ENCODE measurements at regions of chr15 and their contacts with region 1.

Region 1: GRCh38 chr15:88454867-88455810 is 12.0 kb downstream of the MRPL46 start:
- DNase-seq: peak; percentile 64
- ATAC-seq: peak; percentile 87
- H3K4me3 Mint-ChIP-seq: no peak overlapping the region
- H3K27ac Mint-ChIP-seq: no peak overlapping the region
- H3K4me1 Mint-ChIP-seq: peaks cover 6% of the 10 kb centered on the region
- H3K27me3 Mint-ChIP-seq: no peaks in the 10 kb centered on the region

Region 2: GRCh38 chr15:88467073-88467934 is 12.2 kb after region 1 on chr15 and contains the starts of genes MRPL46 and MRPS11:
- CTCF ChIA-PET with region 1: interaction called, 34 read pairs
- POLR2A ChIA-PET with region 1: interaction called, 13 read pairs
- DNase-seq: peak; percentile 93
- ATAC-seq: peak; percentile 93
- H3K4me3 Mint-ChIP-seq: peak within 1 kb of the TSS; percentile 95
- H3K27ac Mint-ChIP-seq: peak within 1 kb of the TSS; percentile 99
- H3K4me1 Mint-ChIP-seq: peaks cover 29% of the 10 kb centered on the region
- H3K27me3 Mint-ChIP-seq: no peaks in the 10 kb centered on the region
- total RNA-seq, gene MRPL46: 28.8 to 31.3 TPM
- total RNA-seq, gene MRPS11: 63.8 to 69.8 TPM

Measured in activated CD8-positive, alpha-beta T cell treated with anti-CD3 and anti-CD28 coated beads, Interleukin-2, amount 10 ng/mL, durations not matched to agents 7 days and 5 days (primary cell).